Dorsolateral prefrontal cortex (tissue), 120 donors: ENCODE measurements at regions of chr19 and their contacts with region 1.

Region 1: DNA sequence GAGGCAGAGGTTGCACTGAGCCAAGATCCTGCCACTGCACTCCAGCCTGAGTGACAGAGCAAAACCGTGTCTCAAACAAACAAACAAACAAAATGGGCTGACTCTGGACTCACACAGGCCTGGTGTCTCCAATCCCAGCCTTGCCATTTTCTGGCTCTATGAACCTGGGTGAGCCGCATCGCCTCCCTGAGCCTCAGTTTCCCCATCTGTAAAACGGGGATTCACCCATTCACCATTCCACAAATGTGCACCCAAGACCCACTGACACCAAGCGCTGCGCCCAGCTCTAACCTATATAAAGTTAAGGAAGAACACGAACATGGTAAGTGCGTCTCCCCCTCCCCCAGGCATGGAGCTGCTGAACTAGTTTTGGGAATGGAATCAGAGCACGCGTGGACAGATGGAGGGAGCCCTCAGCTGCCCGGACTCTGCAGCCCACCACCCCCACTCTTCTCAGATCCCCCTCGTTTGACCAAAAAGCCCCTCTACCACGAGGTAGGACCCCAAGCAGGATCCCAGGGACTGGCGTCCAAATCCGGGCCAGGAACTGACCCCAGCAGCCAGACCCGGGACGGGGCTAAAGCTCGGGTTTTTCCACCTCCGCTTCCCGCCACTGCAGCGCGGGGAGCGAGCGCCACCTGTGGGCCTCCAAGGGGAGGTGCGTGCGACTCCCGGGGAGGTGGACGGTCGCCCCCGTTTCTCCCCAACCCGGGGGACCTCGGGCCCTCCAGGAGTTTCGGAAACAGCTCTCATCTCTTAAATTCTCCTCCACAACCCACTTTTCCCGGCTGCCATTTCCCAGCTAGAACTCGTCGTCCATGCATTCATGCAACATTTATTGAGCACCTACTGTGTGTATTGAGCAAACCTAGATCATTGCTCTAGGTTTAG is 33.0 kb upstream of the ADGRE5 start:
- DNase-seq: peak; percentile 23 to 77 (median 54)
- H3K4me3 ChIP-seq: peak overlapping the region in 52 of 59 donors; percentile 7 to 57 (median 37)
- H3K27ac ChIP-seq: peak overlapping the region in 1 of 59 donors; percentile 22
- H3K27me3 ChIP-seq: peaks cover 0 to 8% (median 0%) of the 10 kb centered on the region in 45 donors
- CTCF ChIP-seq: peak; percentile 70 to 97 (median 95)

Region 2: GRCh38 chr19:14147797-14148605 is 200.2 kb before region 1 on chr19:
- intact Hi-C with region 1: loop called (anchors 1 to 5 kb)
- DNase-seq: peak; percentile 58 to 81 (median 78)
- H3K4me3 ChIP-seq: peak overlapping the region in 14 of 59 donors; percentile 0 to 42 (median 14)
- H3K27ac ChIP-seq: peak overlapping the region in 56 of 59 donors; percentile 9 to 92 (median 79)
- H3K27me3 ChIP-seq: no peaks in the 10 kb centered on the region
- CTCF ChIP-seq: peak; percentile 49 to 93 (median 85)

Region 3: GRCh38 chr19:14198384-14199376 is 149.6 kb before region 1 on chr19:
- intact Hi-C with region 1: loop called (anchors 5 to 10 kb)
- DNase-seq: no peak
- H3K4me3 ChIP-seq: no peak overlapping the region
- H3K27ac ChIP-seq: peak overlapping the region in 9 of 59 donors; percentile 6 to 45 (median 16)
- H3K27me3 ChIP-seq: no peaks in the 10 kb centered on the region
- CTCF ChIP-seq: peak in 28 of 56 donors; percentile 8 to 45 (median 27)

Region 4: DNA sequence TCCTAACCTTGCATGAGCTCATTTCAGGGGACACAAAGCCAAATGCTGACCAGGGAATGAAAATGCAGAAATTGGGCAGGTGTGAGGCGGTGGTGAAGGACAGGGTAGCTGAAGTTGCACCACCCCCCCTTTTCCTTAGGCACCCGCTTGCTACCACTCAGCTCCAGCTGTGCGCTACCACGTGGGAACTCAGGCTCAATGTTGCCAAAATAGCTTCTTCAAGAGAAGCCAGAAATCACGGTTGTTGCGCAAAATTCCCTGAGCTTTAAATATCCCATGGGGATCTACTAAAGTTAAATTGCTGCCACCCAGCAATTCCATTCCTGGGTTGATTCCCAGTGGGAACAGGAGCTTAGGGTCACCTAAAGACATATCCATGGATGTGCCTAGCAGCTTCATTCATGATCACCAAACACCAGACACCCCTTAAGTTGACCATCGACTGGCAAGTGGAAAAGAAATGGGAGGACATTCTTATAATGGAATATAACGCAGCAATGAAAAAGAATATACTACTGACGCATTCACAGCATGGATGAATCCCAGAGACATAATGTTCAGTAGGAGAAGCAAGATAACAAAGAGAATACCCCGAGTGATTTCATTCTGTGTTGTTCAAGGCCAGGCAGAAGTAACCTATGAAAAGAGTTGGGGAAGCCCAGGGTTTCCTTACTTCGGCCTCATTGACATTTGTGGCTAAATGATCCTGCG is 129.5 kb before region 1 on chr19:
- intact Hi-C with region 1: loop called in 1 of 2 experiments (anchors 5 kb)
- DNase-seq: peak in 3 of 10 donors; percentile 44 to 64 (median 56)
- H3K4me3 ChIP-seq: no peak overlapping the region
- H3K27ac ChIP-seq: peak overlapping the region in 1 of 59 donors; percentile 6
- H3K27me3 ChIP-seq: no peaks in the 10 kb centered on the region
- CTCF ChIP-seq: no peak

Region 5: DNA sequence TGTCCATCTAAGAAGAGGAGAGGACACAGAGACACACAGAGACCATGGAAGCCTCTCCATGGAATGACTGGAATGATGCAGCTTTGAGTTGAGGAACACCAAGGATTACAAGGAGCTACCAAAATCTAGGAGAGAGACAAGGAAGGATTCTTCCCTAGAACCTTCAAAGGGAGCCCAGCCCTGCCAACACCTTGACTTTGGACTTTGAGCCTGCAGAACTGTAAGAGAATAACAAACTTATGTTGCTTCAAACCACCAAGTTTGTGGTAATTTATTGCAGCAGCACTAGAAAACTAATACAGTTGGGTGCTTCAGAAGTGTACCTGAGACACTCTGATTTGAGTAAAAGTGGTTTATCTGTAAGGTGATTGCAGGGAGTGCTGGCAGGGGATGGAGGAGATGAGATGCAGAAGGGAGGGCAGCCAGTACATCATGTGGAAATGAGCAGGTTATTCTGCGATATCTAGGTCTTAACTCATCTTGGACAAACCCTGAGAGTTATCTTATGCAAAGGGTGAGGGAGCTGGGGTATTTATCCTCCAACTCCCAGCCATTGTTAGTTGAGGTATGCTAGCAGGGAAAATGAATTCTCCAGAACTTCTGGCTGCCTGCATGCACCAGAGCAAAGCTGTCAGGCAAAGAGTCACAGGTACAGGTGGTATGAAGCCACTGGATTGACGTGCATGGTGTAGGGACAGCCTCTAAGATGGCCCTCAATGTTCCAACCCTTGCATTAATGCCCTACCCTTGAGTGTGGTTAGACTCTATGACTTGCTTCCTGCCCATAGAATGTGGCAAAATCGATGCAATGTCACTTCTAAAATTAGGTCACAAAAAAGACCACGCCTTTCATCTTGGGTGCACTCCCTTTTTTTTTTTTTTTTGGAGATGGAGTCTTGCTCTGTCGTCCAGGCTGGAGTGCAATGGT is 111.0 kb before region 1 on chr19:
- intact Hi-C with region 1: no loop called
- DNase-seq: no peak
- H3K4me3 ChIP-seq: no peak overlapping the region
- H3K27ac ChIP-seq: no peak overlapping the region
- H3K27me3 ChIP-seq: no peaks in the 10 kb centered on the region
- CTCF ChIP-seq: no peak

Region 6: GRCh38 chr19:14248578-14249011 is 99.6 kb before region 1 on chr19:
- intact Hi-C with region 1: no loop called
- DNase-seq: peak; percentile 43 to 75 (median 62)
- H3K4me3 ChIP-seq: peak overlapping the region; percentile 42 to 80 (median 67)
- H3K27ac ChIP-seq: peak overlapping the region in 58 of 59 donors; percentile 5 to 96 (median 88)
- H3K27me3 ChIP-seq: no peaks in the 10 kb centered on the region
- CTCF ChIP-seq: no peak